Natural killer cell (primary cell): ENCODE measurements at regions of chr3 and their contacts with region 1.

Region 1: GRCh38 chr3:187745201-187746058 is at the start of gene BCL6:
- DNase-seq: peak; percentile 86 to 96
- ATAC-seq: peak; percentile 69 to 85 (median 75)
- H3K4me3 ChIP-seq: peak within 1 kb of the TSS; percentile 82
- H3K4me3 Mint-ChIP-seq: peak within 1 kb of the TSS; percentile 99
- H3K27ac ChIP-seq: peak within 1 kb of the TSS; percentile 91
- H3K27ac Mint-ChIP-seq: peak within 1 kb of the TSS; percentile 97 to 100
- H3K4me1 ChIP-seq: peaks cover 32% of the 10 kb centered on the region
- H3K4me1 Mint-ChIP-seq: peaks cover 75 to 81% of the 10 kb centered on the region in 2 donors
- H3K27me3 ChIP-seq: no peaks in the 10 kb centered on the region
- H3K27me3 Mint-ChIP-seq: no peaks in the 10 kb centered on the region
- CTCF ChIP-seq: no peak
- total RNA-seq, gene BCL6: 41.0 to 59.0 (median 45.2) TPM

Region 2: GRCh38 chr3:187706971-187707370 is 38.5 kb before region 1 on chr3:
- intact Hi-C with region 1: no loop called
- DNase-seq: no peak
- ATAC-seq: no peak
- H3K4me3 ChIP-seq: no peak overlapping the region
- H3K4me3 Mint-ChIP-seq: no peak overlapping the region
- H3K27ac ChIP-seq: no peak overlapping the region
- H3K27ac Mint-ChIP-seq: no peak overlapping the region
- H3K4me1 ChIP-seq: no peaks in the 10 kb centered on the region
- H3K4me1 Mint-ChIP-seq: no peaks in the 10 kb centered on the region
- H3K27me3 ChIP-seq: no peaks in the 10 kb centered on the region
- H3K27me3 Mint-ChIP-seq: peaks cover 2 to 9% of the 10 kb centered on the region in 2 donors
- CTCF ChIP-seq: no peak

Region 3: GRCh38 chr3:187828579-187829452 is 83.4 kb after region 1 on chr3:
- intact Hi-C with region 1: loop called (anchors 2 kb)
- DNase-seq: peak; percentile 37 to 49
- ATAC-seq: peak; percentile 81 to 87 (median 86)
- H3K4me3 ChIP-seq: no peak overlapping the region
- H3K4me3 Mint-ChIP-seq: peak overlapping the region; percentile 14
- H3K27ac ChIP-seq: peak overlapping the region; percentile 22
- H3K27ac Mint-ChIP-seq: peak overlapping the region; percentile 75 to 91
- H3K4me1 ChIP-seq: peaks cover 29% of the 10 kb centered on the region
- H3K4me1 Mint-ChIP-seq: peaks cover 39 to 46% of the 10 kb centered on the region in 2 donors
- H3K27me3 ChIP-seq: no peaks in the 10 kb centered on the region
- H3K27me3 Mint-ChIP-seq: peaks cover 0 to 4% of the 10 kb centered on the region in 2 donors
- CTCF ChIP-seq: no peak

Region 4: GRCh38 chr3:187994221-187995042 is 249.0 kb after region 1 on chr3:
- intact Hi-C with region 1: loop called (anchors 5 kb)
- DNase-seq: peak in 1 of 2 donors; percentile 65
- ATAC-seq: peak; percentile 87 to 92 (median 89)
- H3K4me3 ChIP-seq: no peak overlapping the region
- H3K4me3 Mint-ChIP-seq: peak overlapping the region; percentile 63
- H3K27ac ChIP-seq: peak overlapping the region; percentile 74
- H3K27ac Mint-ChIP-seq: peak overlapping the region; percentile 72 to 87
- H3K4me1 ChIP-seq: peaks cover 22% of the 10 kb centered on the region
- H3K4me1 Mint-ChIP-seq: peaks cover 61 to 66% of the 10 kb centered on the region in 2 donors
- H3K27me3 ChIP-seq: no peaks in the 10 kb centered on the region
- H3K27me3 Mint-ChIP-seq: no peaks in the 10 kb centered on the region
- CTCF ChIP-seq: no peak

Region 5: DNA sequence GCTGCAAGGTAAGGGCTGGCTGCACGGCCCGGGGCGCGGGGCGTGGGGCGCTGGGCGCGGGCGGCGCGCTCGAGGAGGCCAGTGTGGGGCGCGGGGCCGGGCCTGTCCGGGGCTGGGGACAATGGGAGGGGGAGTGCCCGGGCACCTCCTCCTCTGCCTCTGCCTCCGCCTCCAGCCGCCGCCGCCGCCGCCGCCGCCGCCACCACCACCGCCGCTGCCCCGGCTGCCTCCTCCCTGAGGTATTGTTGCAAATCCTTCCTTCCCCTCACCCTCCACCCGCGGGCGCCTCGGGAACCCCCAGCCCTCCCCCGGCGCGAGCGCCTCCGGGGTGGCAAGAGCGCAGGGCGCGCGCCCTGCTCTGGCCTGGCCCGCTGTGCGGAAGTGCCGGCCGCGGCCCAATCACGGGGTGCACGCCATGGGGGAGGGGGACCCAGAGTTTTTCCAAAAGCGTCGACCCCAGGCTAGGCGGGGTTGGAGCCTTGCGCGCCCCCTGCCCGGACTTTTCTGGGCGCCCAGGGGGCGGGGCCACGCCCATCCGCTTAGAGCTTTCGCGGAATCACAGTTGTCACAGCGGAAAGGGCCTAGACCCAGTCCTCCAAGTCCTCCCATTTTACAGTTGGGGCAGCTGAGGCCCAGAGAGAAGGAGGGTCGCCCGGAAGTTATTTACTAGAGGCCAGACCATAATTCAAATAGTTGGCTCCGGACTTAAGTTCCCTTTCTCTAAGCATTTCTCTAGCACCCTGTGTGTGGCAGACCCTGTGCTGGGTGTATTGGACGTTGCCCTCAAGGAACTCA is 408.8 kb after region 1 on chr3 and contains the start of gene LPP:
- intact Hi-C with region 1: loop called (anchors 1 kb)
- DNase-seq: peak; percentile 89 to 91
- ATAC-seq: peak; percentile 85 to 94 (median 92)
- H3K4me3 ChIP-seq: peak within 1 kb of the TSS; percentile 95
- H3K4me3 Mint-ChIP-seq: peak within 1 kb of the TSS; percentile 96
- H3K27ac ChIP-seq: peak within 1 kb of the TSS; percentile 90
- H3K27ac Mint-ChIP-seq: peak within 1 kb of the TSS; percentile 89 to 95
- H3K4me1 ChIP-seq: peaks cover 34% of the 10 kb centered on the region
- H3K4me1 Mint-ChIP-seq: peaks cover 60 to 65% of the 10 kb centered on the region in 2 donors
- H3K27me3 ChIP-seq: no peaks in the 10 kb centered on the region
- H3K27me3 Mint-ChIP-seq: no peaks in the 10 kb centered on the region
- CTCF ChIP-seq: no peak
- total RNA-seq, gene LPP: 137 to 163 (median 149) TPM

Region 6: GRCh38 chr3:188185717-188186251 is 440.4 kb after region 1 on chr3:
- intact Hi-C with region 1: loop called (anchors 10 kb)
- DNase-seq: peak in 1 of 2 donors; percentile 18
- ATAC-seq: no peak
- H3K4me3 ChIP-seq: no peak overlapping the region
- H3K4me3 Mint-ChIP-seq: no peak overlapping the region
- H3K27ac ChIP-seq: no peak overlapping the region
- H3K27ac Mint-ChIP-seq: peak overlapping the region in 1 of 2 donors; percentile 15
- H3K4me1 ChIP-seq: peaks cover 23% of the 10 kb centered on the region
- H3K4me1 Mint-ChIP-seq: peaks cover 58 to 67% of the 10 kb centered on the region in 2 donors
- H3K27me3 ChIP-seq: no peaks in the 10 kb centered on the region
- H3K27me3 Mint-ChIP-seq: no peaks in the 10 kb centered on the region
- CTCF ChIP-seq: no peak

Region 7: DNA sequence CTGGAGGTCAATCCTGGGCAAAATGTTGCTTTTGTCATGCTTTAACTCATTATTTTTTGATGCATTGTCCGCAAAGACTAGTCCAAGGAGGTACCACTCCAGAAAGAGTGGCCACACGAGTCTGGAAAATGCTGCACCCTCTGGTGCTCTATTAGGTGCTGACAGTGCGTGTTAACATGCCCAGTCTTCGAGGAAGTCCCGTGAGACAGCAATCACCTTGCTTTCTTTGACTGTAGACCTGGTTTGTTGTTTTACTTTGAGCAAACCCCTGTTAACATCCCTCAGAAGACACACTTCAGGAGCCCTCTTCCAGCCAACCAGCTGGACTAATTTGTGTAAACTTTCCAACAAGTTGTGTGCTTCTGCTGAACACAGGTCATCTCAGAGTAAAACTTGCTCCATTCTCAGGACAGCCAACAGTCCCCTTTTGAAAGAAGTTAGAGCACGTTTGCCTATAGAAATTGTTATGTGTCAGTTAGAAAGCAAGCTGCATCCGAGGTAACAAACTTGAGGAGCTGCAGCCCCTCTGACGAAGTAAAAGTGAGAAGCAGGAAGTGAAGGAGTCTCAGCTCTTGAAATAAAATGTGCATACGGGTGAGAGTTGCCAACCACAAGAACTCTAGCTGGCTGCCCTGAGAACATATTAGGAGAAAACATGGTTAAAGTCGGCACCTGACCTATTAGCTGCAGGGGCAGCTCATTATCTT is 613.5 kb after region 1 on chr3:
- intact Hi-C with region 1: loop called (anchors 1 kb)
- DNase-seq: peak; percentile 30 to 72
- ATAC-seq: peak; percentile 78 to 88 (median 85)
- H3K4me3 ChIP-seq: peak overlapping the region; percentile 14
- H3K4me3 Mint-ChIP-seq: peak overlapping the region; percentile 78
- H3K27ac ChIP-seq: peak overlapping the region; percentile 78
- H3K27ac Mint-ChIP-seq: peak overlapping the region; percentile 74 to 79
- H3K4me1 ChIP-seq: peaks cover 29% of the 10 kb centered on the region
- H3K4me1 Mint-ChIP-seq: peaks cover 52 to 56% of the 10 kb centered on the region in 2 donors
- H3K27me3 ChIP-seq: no peaks in the 10 kb centered on the region
- H3K27me3 Mint-ChIP-seq: peaks cover 0 to 7% of the 10 kb centered on the region in 2 donors
- CTCF ChIP-seq: no peak